Endothelial cell of umbilical vein (primary cell): ENCODE measurements at regions of chr2 and their contacts with region 1.

Region 1: DNA sequence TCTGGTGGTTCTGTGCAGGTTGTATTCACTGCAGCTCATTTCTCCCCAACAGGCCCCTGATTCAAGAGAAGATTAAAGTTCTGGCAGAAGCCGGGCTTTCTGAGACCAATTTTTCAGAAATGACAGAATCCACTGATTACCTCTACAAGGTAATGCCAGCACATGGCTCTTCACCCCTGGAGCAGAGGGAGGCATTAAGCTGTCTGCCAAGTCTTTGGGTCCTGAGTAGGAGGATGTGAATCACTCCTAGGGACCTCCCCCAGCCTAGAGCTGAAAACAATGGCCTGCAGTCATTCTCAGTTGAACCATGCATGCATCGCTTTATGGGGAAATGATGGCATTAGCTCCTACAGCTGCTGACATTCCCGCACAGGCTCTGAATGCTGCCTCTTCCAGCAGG is 20.5 kb upstream of the RPL37A start:
- DNase-seq: peak; percentile 95
- H3K4me3 ChIP-seq: no peak overlapping the region
- H3K27ac ChIP-seq: peak overlapping the region; percentile 54
- H3K4me1 ChIP-seq: peaks cover 19% of the 10 kb centered on the region
- H3K27me3 ChIP-seq: no peaks in the 10 kb centered on the region
- CTCF ChIP-seq: no peak
- POLR2A ChIP-seq: no peak

Region 2: GRCh38 chr2:216339808-216340631 is 138.1 kb before region 1 on chr2:
- CTCF ChIA-PET with region 1: no interaction called
- POLR2A ChIA-PET with region 1: no interaction called
- dilution Hi-C with region 1: no loop called
- intact Hi-C with region 1: no loop called
- DNase-seq: peak; percentile 57
- H3K4me3 ChIP-seq: no peak overlapping the region
- H3K27ac ChIP-seq: no peak overlapping the region
- H3K4me1 ChIP-seq: peaks cover 11% of the 10 kb centered on the region
- H3K27me3 ChIP-seq: no peaks in the 10 kb centered on the region
- CTCF ChIP-seq: peak in 1 of 2 donors; percentile 19
- POLR2A ChIP-seq: no peak

Region 3: GRCh38 chr2:216467845-216468244 is 10.3 kb before region 1 on chr2:
- CTCF ChIA-PET with region 1: interaction called, 5 read pairs
- POLR2A ChIA-PET with region 1: interaction called, 3 read pairs
- dilution Hi-C with region 1: no loop called
- intact Hi-C with region 1: loop called (anchors 1 kb)
- DNase-seq: no peak
- H3K4me3 ChIP-seq: no peak overlapping the region
- H3K27ac ChIP-seq: no peak overlapping the region
- H3K4me1 ChIP-seq: no peaks in the 10 kb centered on the region
- H3K27me3 ChIP-seq: no peaks in the 10 kb centered on the region
- CTCF ChIP-seq: no peak
- POLR2A ChIP-seq: no peak

Region 4: DNA sequence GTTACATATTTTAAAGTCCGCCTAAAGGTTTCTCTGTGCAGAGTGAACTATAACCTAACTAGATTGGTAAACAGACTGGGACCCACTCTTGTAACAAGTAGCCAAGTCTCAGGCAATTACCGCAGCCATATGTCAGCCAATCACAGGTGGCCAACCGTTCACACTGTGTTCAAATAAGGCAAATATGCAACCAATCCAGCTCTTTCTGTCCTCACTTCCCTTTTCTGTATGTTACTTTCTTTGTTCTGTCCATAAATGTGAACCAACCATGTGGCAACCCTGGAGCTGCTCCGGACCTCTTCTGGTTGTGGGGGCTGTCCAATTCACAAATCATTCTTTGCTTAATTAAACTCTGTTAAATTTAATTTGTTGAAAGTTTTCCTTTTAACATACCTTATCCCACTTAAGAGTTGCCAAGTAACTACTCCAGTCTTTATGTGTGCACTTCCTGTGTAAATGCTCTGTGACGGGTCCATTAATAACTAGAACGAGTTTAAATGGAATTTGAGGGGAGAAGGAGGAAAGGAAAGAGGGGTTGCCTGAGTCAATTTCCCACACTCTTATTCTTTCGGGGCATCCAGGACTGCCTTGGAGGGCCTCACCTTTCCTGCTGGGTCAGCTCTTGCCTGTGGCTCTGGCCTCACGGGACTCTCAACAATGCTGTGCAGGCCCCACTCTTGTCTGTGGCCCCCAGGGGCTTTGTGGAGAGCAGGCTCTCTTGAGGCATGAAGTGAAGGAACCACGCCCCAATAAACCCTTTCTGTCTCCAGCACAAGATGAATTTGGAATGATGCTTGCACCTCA is 13.8 kb after region 1 on chr2:
- CTCF ChIA-PET with region 1: interaction called, 12 read pairs
- POLR2A ChIA-PET with region 1: interaction called, 12 read pairs
- dilution Hi-C with region 1: no loop called
- intact Hi-C with region 1: loop called (anchors 1 kb)
- DNase-seq: no peak
- H3K4me3 ChIP-seq: no peak overlapping the region
- H3K27ac ChIP-seq: peak overlapping the region; percentile 25
- H3K4me1 ChIP-seq: peaks cover 48% of the 10 kb centered on the region
- H3K27me3 ChIP-seq: no peaks in the 10 kb centered on the region
- CTCF ChIP-seq: no peak
- POLR2A ChIP-seq: no peak

Region 5: GRCh38 chr2:216810399-216811160 is 332.4 kb after region 1 on chr2:
- CTCF ChIA-PET with region 1: no interaction called
- POLR2A ChIA-PET with region 1: no interaction called
- dilution Hi-C with region 1: no loop called
- intact Hi-C with region 1: no loop called
- DNase-seq: no peak
- H3K4me3 ChIP-seq: no peak overlapping the region
- H3K27ac ChIP-seq: no peak overlapping the region
- H3K4me1 ChIP-seq: no peaks in the 10 kb centered on the region
- H3K27me3 ChIP-seq: no peaks in the 10 kb centered on the region
- CTCF ChIP-seq: no peak
- POLR2A ChIP-seq: no peak